IMR-90 (cell line): ENCODE measurements at regions of chr5 and their contacts with region 1.

Region 1: DNA sequence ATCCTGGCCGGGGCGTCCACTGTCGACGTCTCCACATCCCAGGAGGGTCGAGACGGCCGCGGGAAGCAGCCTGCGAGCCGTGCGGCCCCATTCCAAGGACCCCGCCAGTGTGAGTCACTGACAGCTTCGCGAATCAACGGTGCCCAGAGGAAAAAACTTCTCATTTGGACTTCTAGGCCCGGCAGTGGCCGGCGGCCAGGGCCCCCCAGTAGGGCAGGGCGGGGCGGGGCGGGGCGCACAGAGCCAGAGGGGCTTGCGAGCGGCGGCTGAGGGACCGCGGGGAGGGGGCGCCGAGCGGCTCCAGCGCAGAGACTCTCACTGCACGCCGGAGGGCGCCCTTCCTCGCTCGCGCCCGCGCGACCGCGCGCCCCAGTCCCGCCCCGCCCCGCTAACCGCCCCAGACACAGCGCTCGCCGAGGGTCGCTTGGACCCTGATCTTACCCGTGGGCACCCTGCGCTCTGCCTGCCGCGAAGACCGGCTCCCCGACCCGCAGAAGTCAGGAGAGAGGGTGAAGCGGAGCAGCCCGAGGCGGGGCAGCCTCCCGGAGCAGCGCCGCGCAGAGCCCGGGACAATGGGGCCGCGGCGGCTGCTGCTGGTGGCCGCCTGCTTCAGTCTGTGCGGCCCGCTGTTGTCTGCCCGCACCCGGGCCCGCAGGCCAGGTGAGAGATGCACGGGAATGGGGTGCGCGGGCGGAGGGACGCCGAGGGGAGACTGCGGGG is at the start of gene F2R:
- DNase-seq: peak; percentile 70
- ATAC-seq: peak; percentile 84
- H3K4me3 ChIP-seq: peak within 1 kb of the TSS; percentile 89
- H3K27ac ChIP-seq: peak within 1 kb of the TSS; percentile 92
- H3K4me1 ChIP-seq: peaks cover 12% of the 10 kb centered on the region
- H3K27me3 ChIP-seq: no peaks in the 10 kb centered on the region
- CTCF ChIP-seq: peak; percentile 62
- POLR2A ChIP-seq: peak; percentile 61
- RAD21 ChIP-seq: peak; percentile 46
- total RNA-seq, gene F2R: 85.7 and 96.7 TPM in 2 replicates

Region 2: GRCh38 chr5:76601470-76601869 is 114.4 kb before region 1 on chr5:
- CTCF ChIA-PET with region 1: interaction called, 3 read pairs
- POLR2A ChIA-PET with region 1: no interaction called
- dilution Hi-C with region 1: no loop called
- in situ Hi-C with region 1: loop called (anchors 10 kb)
- intact Hi-C with region 1: loop called (anchors 1 kb)
- DNase-seq: peak; percentile 80
- ATAC-seq: peak; percentile 75
- H3K4me3 ChIP-seq: no peak overlapping the region
- H3K27ac ChIP-seq: no peak overlapping the region
- H3K4me1 ChIP-seq: peaks cover 2% of the 10 kb centered on the region; the same call in 1 of the 2 replicates
- H3K27me3 ChIP-seq: no peaks in the 10 kb centered on the region
- CTCF ChIP-seq: peak; percentile 85
- POLR2A ChIP-seq: no peak
- RAD21 ChIP-seq: peak; percentile 90

Region 3: GRCh38 chr5:76641514-76642120 is 74.3 kb before region 1 on chr5:
- CTCF ChIA-PET with region 1: interaction called, 3 read pairs
- POLR2A ChIA-PET with region 1: no interaction called
- dilution Hi-C with region 1: no loop called
- in situ Hi-C with region 1: no loop called
- intact Hi-C with region 1: loop called (anchors 5 kb)
- DNase-seq: peak; percentile 79
- ATAC-seq: peak; percentile 69
- H3K4me3 ChIP-seq: no peak overlapping the region
- H3K27ac ChIP-seq: no peak overlapping the region
- H3K4me1 ChIP-seq: peaks cover 10% of the 10 kb centered on the region
- H3K27me3 ChIP-seq: no peaks in the 10 kb centered on the region
- CTCF ChIP-seq: peak; percentile 94
- POLR2A ChIP-seq: no peak
- RAD21 ChIP-seq: peak; percentile 93

Region 4: GRCh38 chr5:76867827-76868693 is 152.2 kb after region 1 on chr5:
- CTCF ChIA-PET with region 1: no interaction called
- POLR2A ChIA-PET with region 1: no interaction called
- dilution Hi-C with region 1: no loop called
- in situ Hi-C with region 1: no loop called
- intact Hi-C with region 1: loop called (anchors 5 kb)
- DNase-seq: peak; percentile 73
- ATAC-seq: peak; percentile 88
- H3K4me3 ChIP-seq: no peak overlapping the region
- H3K27ac ChIP-seq: no peak overlapping the region
- H3K4me1 ChIP-seq: peaks cover 2% of the 10 kb centered on the region; the same call in 1 of the 2 replicates
- H3K27me3 ChIP-seq: no peaks in the 10 kb centered on the region
- CTCF ChIP-seq: peak; percentile 89
- POLR2A ChIP-seq: no peak
- RAD21 ChIP-seq: peak; percentile 88

Region 5: DNA sequence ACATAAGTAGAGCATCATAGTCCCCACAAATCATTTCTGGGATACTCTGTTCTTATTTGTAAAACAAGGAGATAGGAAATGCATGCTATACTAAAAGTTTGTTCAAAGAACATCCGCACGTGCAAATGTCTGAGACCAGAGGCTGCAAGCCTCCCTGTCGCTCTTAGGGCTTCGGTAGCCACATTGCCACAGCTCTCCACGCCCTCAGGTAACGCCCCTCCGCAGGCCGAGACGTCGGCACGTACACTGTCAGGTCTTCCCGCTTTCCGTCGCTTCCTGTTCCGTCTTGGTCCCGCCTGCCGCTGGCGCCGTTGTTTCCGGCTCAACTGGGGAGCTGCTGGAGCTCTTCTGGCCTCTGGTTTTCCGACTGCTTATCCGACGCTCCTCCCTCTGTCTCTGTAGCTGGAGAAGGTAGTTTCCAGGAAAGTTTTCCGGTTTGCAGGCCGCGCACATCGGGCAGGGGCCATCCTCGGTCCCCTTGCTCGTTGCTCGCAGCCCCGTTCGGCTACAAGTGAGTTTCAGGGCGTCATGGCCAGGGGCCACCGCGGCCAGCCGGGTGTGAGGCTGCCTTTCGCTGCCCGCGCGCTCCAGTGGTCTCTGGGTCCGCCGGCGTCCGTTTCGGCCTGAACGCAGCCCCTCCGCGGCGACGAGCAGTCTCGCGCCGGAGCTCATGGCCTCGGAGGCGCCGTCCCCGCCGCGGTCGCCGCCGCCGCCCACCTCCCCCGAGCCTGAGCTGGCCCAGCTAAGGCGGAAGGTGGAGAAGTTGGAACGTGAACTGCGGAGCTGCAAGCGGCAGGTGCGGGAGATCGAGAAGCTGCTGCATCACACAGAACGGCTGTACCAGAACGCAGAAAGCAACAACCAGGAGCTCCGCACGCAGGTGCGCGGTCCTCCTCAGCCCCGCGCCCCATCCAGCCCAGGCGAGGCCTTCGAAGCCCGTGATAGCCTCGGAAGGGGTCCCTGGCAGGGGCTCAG is 314.5 kb after region 1 on chr5 and contains the start of gene AGGF1:
- CTCF ChIA-PET with region 1: no interaction called
- POLR2A ChIA-PET with region 1: no interaction called
- dilution Hi-C with region 1: no loop called
- in situ Hi-C with region 1: no loop called
- intact Hi-C with region 1: loop called (anchors 5 kb)
- DNase-seq: peak; percentile 92
- ATAC-seq: peak; percentile 98
- H3K4me3 ChIP-seq: peak within 1 kb of the TSS; percentile 94
- H3K27ac ChIP-seq: peak within 1 kb of the TSS; percentile 87
- H3K4me1 ChIP-seq: peaks cover 2% of the 10 kb centered on the region
- H3K27me3 ChIP-seq: no peaks in the 10 kb centered on the region; the same call in none of the 2 replicates
- CTCF ChIP-seq: no peak
- POLR2A ChIP-seq: peak; percentile 66; the same call in 1 of the 2 replicates
- RAD21 ChIP-seq: no peak
- total RNA-seq, gene AGGF1: 7.3 and 12.8 TPM in 2 replicates